ENCODE measurements at regions of chr2 and their contacts with region 1.

Region 1: GRCh38 chr2:43484323-43484930 is 111.4 kb downstream of the THADA start:
- DNase-seq: no peak
- ATAC-seq: peak; percentile 30

Region 2: GRCh38 chr2:42828487-42829425 is 655.7 kb before region 1 on chr2:
- intact Hi-C with region 1: loop called (anchors 1 kb)
- DNase-seq: peak; percentile 91
- ATAC-seq: peak; percentile 92

Region 3: DNA sequence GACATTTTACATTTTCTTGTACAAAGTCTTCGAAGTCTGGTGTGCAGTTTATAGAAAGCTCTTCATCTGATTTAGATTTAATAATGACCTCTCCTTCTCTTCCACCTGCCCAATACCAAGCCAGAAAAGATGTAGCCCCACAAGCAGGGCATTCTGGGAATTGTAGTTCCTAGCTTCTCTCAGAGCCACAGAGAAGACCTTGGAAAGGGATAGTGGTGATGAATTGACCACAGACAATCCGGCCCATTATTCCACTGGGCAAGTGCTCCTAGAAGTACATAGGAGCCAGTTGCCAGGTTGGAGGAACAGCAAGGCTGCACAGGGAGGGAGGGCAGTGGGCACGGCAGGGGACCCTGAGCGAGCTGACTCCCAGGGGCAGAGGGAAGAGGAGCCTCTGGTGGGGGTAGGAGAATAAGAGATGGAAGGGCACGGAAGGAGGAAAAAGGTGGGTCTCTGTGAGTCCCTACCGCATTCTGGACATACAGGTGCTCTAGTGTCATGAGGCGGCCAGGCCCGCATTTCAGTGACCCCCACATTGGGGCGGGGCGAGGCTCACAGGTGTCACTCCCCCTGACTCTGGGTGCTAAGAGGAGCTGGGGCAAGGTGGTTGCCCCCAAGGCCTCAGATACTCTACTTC is 539.5 kb before region 1 on chr2:
- intact Hi-C with region 1: loop called (anchors 5 kb)
- DNase-seq: no peak
- ATAC-seq: no peak

Region 4: GRCh38 chr2:43024515-43025011 is 459.9 kb before region 1 on chr2:
- intact Hi-C with region 1: loop called (anchors 5 kb)
- DNase-seq: peak; percentile 81
- ATAC-seq: peak; percentile 47

Region 5: GRCh38 chr2:43226558-43226954 is 257.9 kb before region 1 on chr2 and contains the start of gene ZFP36L2:
- intact Hi-C with region 1: loop called (anchors 2 kb)
- DNase-seq: peak; percentile 99
- ATAC-seq: peak; percentile 82
- total RNA-seq, gene ZFP36L2: 51.1 TPM

Region 6: GRCh38 chr2:43333656-43334144 is 150.7 kb before region 1 on chr2:
- intact Hi-C with region 1: loop called (anchors 5 kb)
- DNase-seq: no peak
- ATAC-seq: peak; percentile 64

Region 7: GRCh38 chr2:43542285-43542937 is 58.0 kb after region 1 on chr2:
- intact Hi-C with region 1: loop called (anchors 5 kb)
- DNase-seq: no peak
- ATAC-seq: no peak

Region 8: GRCh38 chr2:43737097-43737854 is 252.8 kb after region 1 on chr2:
- intact Hi-C with region 1: no loop called
- DNase-seq: no peak
- ATAC-seq: no peak

Measured in Right ventricle myocardium inferior (tissue), 1 donor.